BJ (cell line): ENCODE measurements at regions of chr1 and their contacts with region 1.

Region 1: GRCh38 chr1:23643736-23644554 is 47.7 kb upstream of the RPL11 start:
- DNase-seq: no peak
- H3K4me3 ChIP-seq: no peak overlapping the region
- H3K27me3 ChIP-seq: peaks cover 19% of the 10 kb centered on the region
- CTCF ChIP-seq: no peak

Region 2: DNA sequence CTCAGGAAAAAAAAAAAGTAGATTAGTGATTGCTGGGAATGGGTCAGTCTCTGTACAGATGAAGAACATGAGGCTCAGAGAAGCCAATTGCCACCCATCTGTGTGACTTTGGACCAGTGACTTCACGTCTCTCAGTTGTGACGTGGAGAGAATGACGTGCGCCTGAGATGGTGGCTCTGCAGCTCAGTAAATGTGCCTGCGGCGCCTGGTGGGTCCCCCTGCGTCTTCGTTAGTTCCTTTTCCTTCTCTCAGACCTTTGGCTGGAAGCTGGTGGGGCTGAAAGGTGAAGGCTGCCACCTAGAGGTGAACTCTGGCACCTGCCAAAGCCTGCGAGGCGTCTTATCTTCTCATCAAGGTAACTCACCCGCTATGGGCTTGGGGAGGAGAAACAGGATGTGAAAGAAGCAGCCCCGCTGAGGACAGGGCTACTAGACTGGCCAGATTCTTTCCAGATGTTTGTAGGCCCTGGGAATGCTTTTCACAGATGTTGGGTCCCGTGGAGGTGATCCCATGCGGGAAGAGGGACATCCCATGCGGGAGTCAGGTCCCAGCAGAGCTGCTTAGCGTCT is 104.2 kb before region 1 on chr1:
- CTCF ChIA-PET with region 1: interaction called, 644 read pairs
- POLR2A ChIA-PET with region 1: no interaction called
- DNase-seq: peak; percentile 69
- H3K4me3 ChIP-seq: no peak overlapping the region
- H3K27me3 ChIP-seq: no peaks in the 10 kb centered on the region
- CTCF ChIP-seq: peak; percentile 93

Region 3: DNA sequence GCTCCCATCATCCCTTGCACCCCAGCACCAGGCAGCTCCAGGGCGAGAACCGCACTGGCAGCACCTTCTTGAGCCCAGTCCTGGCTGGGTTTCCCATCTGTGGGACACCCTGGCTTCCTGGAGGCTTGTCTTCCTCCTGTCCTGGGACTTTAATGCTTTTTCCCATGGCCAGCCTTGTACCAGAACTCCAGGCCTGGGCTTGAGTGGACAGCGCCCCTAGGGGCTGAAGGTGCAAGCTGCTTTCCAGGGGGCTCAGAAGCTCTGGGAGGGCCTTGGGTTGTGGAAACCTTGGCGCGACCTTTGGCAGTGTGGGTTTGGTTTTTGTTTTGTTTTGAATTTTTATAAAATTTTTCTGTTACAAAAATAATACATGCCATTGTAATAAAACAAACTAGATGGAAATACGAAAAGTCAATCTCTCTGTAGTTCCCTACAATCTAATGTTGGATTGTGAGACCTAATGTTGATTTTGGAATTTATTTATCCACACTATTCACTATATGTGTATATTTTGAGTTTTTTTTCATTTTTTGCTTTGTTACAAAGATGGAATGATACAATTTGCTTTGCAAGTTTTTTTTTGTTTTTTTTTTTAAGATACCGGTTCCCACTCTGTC is 13.8 kb after region 1 on chr1:
- CTCF ChIA-PET with region 1: interaction called, 17 read pairs
- POLR2A ChIA-PET with region 1: interaction called, 6 read pairs
- DNase-seq: no peak
- H3K4me3 ChIP-seq: no peak overlapping the region
- H3K27me3 ChIP-seq: no peaks in the 10 kb centered on the region
- CTCF ChIP-seq: peak; percentile 89

Region 4: DNA sequence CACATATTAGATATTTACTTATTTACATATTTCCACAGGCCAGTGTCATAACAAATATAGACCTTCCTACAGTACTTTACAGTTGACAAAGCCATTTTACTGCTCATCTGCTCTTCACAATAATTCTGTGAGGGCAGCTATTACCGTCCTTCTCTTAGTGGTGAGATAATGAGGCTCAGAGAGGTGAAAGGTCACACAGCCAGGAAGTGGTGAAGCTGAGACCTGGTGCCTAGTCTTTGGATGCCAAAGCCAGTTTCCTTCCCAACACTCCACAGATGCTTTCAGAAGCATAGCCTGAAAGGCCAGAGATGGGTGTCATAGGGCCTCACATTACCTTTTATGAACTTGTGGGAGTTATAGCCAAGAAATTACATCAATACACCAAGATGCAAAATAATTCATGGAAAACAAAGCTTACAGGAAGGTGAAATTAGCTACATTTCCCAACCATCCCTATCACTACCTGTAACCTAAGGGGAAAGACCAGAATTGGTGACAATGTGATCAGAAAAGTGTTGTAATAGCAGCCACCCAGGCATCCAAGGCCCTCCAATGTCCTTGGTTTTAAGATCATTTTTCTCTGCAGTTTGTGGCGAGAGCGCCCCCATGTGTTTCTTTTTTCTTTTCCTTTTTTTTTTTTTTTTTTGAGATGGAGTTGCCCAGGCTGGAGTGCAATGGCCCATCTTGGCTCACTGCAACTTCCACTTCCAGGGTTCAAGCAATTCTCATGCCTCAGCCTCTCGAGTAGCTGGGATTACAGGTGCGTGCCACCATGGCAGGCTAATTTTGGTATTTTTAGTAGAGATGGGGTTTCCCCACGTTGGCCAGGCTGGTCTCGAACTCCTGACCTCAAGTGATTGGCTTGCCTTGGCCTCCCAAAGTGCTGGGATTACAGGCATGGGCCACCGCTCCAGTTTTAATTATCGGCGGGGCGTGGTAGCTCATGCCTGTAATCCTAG is 21.2 kb after region 1 on chr1:
- CTCF ChIA-PET with region 1: interaction called, 18 read pairs
- POLR2A ChIA-PET with region 1: interaction called, 6 read pairs
- DNase-seq: no peak
- H3K4me3 ChIP-seq: no peak overlapping the region
- H3K27me3 ChIP-seq: no peaks in the 10 kb centered on the region
- CTCF ChIP-seq: peak; percentile 47

Region 5: GRCh38 chr1:23699280-23700179 is 55.6 kb after region 1 on chr1:
- CTCF ChIA-PET with region 1: no interaction called
- POLR2A ChIA-PET with region 1: no interaction called
- DNase-seq: no peak
- H3K4me3 ChIP-seq: no peak overlapping the region
- H3K27me3 ChIP-seq: no peaks in the 10 kb centered on the region
- CTCF ChIP-seq: no peak